ENCODE measurements at regions of chr3 and their contacts with region 1.

Region 1: GRCh38 chr3:23945903-23946751 is 1.0 kb downstream of the NR1D2 start:
- DNase-seq: peak; percentile 96
- H3K4me3 Mint-ChIP-seq: peak overlapping the region; percentile 80
- H3K27ac Mint-ChIP-seq: peak overlapping the region; percentile 85
- H3K4me1 Mint-ChIP-seq: peaks cover 42% of the 10 kb centered on the region
- H3K27me3 Mint-ChIP-seq: peaks cover 4% of the 10 kb centered on the region

Region 2: GRCh38 chr3:23442598-23443383 is 503.3 kb before region 1 on chr3:
- CTCF ChIA-PET with region 1: no interaction called
- intact Hi-C with region 1: loop called (anchors 1 kb)
- DNase-seq: peak; percentile 28
- H3K4me3 Mint-ChIP-seq: no peak overlapping the region
- H3K27ac Mint-ChIP-seq: no peak overlapping the region
- H3K4me1 Mint-ChIP-seq: peaks cover 43% of the 10 kb centered on the region
- H3K27me3 Mint-ChIP-seq: no peaks in the 10 kb centered on the region

Region 3: GRCh38 chr3:23785097-23785645 is 161.0 kb before region 1 on chr3:
- CTCF ChIA-PET with region 1: no interaction called
- intact Hi-C with region 1: no loop called
- DNase-seq: no peak
- H3K4me3 Mint-ChIP-seq: no peak overlapping the region
- H3K27ac Mint-ChIP-seq: no peak overlapping the region
- H3K4me1 Mint-ChIP-seq: no peaks in the 10 kb centered on the region
- H3K27me3 Mint-ChIP-seq: no peaks in the 10 kb centered on the region

Region 4: GRCh38 chr3:23834082-23834870 is 111.9 kb before region 1 on chr3:
- CTCF ChIA-PET with region 1: no interaction called
- intact Hi-C with region 1: loop called (anchors 5 kb)
- DNase-seq: no peak
- H3K4me3 Mint-ChIP-seq: no peak overlapping the region
- H3K27ac Mint-ChIP-seq: no peak overlapping the region
- H3K4me1 Mint-ChIP-seq: peaks cover 51% of the 10 kb centered on the region
- H3K27me3 Mint-ChIP-seq: no peaks in the 10 kb centered on the region

Region 5: GRCh38 chr3:23916886-23917678 is 29.0 kb before region 1 on chr3 and contains the starts of genes NKIRAS1 and RPL15:
- CTCF ChIA-PET with region 1: interaction called, 3 read pairs
- intact Hi-C with region 1: loop called (anchors 1 kb)
- DNase-seq: peak; percentile 97
- H3K4me3 Mint-ChIP-seq: peak within 1 kb of the TSS; percentile 94
- H3K27ac Mint-ChIP-seq: peak within 1 kb of the TSS; percentile 99
- H3K4me1 Mint-ChIP-seq: peaks cover 47% of the 10 kb centered on the region
- H3K27me3 Mint-ChIP-seq: no peaks in the 10 kb centered on the region
- total RNA-seq, gene NKIRAS1: 2.4 to 3.1 TPM
- total RNA-seq, gene RPL15: 2,861 to 2,959 TPM

Region 6: DNA sequence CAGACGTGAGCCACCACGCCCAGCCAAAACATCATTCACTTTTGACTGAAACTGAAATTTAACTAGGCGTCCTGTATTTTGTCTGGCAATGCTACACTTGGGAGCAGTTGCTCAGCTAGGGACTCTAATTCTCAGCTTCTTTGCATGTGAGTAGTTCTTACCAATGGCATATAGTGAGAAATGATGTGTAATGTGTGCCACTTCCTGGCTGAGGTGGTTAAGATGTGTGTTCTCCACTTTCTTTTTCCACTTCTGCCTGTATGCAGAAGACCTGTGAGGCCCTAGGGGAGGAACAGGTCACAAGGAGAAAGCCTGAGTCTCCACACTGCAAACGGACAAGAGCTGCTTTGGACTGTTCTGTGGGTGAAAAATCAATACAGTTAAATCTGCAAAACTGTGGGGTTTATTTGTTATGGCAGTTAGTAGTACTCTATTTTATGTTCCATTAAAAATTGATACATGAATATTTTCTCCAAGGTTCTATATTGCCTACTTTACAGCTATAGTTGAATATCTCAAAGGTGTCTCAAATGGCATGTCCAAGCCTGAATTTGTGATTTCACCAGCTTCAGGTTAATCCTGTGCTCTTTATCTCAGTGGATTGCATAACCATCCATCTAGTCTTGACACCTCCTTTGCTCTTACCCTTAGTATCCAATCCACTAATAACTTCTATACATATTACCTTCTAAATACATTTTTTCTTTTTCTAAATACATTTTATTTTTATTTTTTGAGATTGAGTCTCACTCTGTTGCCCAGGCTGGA is 58.2 kb after region 1 on chr3:
- CTCF ChIA-PET with region 1: no interaction called
- intact Hi-C with region 1: loop called (anchors 1 kb)
- DNase-seq: peak; percentile 58
- H3K4me3 Mint-ChIP-seq: no peak overlapping the region
- H3K27ac Mint-ChIP-seq: peak overlapping the region; percentile 28
- H3K4me1 Mint-ChIP-seq: peaks cover 11% of the 10 kb centered on the region
- H3K27me3 Mint-ChIP-seq: peaks cover 4% of the 10 kb centered on the region

Measured in activated naive CD4-positive, alpha-beta T cell treated with anti-CD3 and anti-CD28 coated beads for 36 hours (primary cell).